Activated T-helper 1 cell treated with anti-CD3 and anti-CD28 coated beads, Interleukin-12 subunit alpha, Interleukin-12 subunit beta, Interleukin-2, Interleukin-4 antibody, amounts not matched to agents 30 ng/mL and 10 ng/mL and 1 ng/mL, durations not matched to agents 14 hours and 24 hours and 36 hours (primary cell): ENCODE measurements at regions of chr20 and their contacts with region 1.

Region 1: DNA sequence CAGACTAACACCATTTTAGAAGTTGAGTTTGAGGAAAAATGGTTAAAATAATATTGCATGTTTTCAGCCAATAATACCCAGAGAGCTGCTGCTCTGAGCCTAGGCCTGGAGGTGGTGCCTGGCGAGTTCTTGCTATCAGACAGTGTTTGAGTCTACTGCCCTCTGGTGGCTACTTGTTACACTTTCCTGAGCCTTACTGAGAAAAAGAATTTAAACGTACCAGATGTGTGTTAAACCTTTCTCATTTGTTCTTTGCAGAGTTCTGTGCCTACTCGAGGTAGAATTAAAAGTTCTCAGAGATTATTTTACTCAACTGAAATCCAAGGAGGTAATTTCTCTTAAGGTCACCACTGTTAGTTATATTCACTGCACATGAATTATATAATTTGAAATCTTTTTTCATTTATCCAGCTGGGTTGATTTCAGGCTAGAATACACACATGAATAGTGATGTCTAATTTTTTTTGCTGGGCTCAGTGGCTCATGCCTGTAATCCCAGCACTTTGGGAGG is 38.2 kb downstream of the SHLD1 start:
- DNase-seq: peak; percentile 66
- H3K4me3 Mint-ChIP-seq: no peak overlapping the region
- H3K27ac Mint-ChIP-seq: no peak overlapping the region
- H3K4me1 Mint-ChIP-seq: peaks cover 5% of the 10 kb centered on the region
- H3K27me3 Mint-ChIP-seq: no peaks in the 10 kb centered on the region

Region 2: DNA sequence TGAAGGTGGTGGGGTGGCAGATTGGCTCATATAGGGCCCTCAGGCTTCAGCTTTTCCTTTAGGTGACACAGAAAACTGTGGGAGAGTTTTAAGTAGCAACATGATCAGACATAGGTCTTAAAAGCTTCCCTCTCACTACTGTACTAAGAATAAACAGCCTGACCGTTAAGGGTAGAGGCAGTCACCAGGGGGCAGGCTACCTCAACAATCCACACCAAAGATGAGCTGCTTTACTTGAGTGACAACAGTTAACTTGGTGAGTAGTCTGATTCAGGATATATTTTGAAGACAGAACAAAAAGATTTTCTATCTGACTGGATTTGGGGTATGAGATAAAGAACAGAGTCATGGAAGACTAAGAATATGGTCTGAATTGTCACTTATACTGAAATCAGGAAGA is 231.3 kb before region 1 on chr20:
- intact Hi-C with region 1: loop called (anchors 1 kb)
- DNase-seq: peak; percentile 36
- H3K4me3 Mint-ChIP-seq: no peak overlapping the region
- H3K27ac Mint-ChIP-seq: peak overlapping the region; percentile 7
- H3K4me1 Mint-ChIP-seq: peaks cover 15% of the 10 kb centered on the region
- H3K27me3 Mint-ChIP-seq: no peaks in the 10 kb centered on the region

Region 3: DNA sequence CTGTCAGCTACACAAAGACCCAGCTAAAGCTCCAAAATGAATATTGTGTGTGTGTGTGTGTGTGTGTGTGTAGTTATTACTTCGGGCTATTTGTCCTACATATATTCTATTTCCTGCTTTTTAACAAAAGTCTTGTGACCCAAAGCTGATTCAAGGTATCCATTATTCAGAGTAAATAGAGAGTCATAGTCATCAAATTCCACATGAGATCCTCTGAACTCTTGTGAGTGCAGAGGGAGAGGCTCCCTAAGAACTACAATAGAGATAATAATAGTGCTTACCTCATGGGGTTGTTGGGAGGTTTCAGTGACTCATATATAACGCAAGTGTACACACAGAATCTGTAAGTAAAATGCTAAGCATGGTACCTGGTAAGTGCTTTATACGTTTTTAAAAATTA is 133.9 kb before region 1 on chr20:
- intact Hi-C with region 1: no loop called
- DNase-seq: no peak
- H3K4me3 Mint-ChIP-seq: no peak overlapping the region
- H3K27ac Mint-ChIP-seq: no peak overlapping the region
- H3K4me1 Mint-ChIP-seq: peaks cover 14% of the 10 kb centered on the region
- H3K27me3 Mint-ChIP-seq: no peaks in the 10 kb centered on the region

Region 4: DNA sequence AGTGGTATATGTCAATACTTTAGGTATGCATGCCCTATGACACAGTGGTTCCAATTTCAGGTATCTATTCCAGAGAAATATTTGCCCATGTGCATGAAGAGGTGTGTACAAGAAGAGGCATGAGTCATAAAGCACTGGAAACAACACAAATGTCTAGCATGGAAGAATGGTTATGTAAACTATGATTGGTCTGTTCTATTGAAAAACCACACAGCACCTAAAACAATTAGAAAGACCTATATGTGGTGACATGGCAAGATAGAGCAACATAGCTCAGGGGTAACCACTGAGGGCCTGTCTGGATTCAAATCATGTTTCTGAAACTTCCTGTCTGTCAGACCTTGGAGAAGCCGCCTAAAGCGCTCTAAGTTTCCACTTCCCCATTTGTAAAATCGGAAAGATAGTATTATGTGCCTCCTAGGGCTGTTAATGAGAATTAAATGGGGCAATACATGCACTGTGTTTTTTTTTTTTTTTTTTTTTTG is 114.2 kb before region 1 on chr20:
- intact Hi-C with region 1: loop called (anchors 1 kb)
- DNase-seq: no peak
- H3K4me3 Mint-ChIP-seq: no peak overlapping the region
- H3K27ac Mint-ChIP-seq: peak overlapping the region; percentile 5
- H3K4me1 Mint-ChIP-seq: peaks cover 7% of the 10 kb centered on the region
- H3K27me3 Mint-ChIP-seq: peaks cover under 1% of the 10 kb centered on the region

Region 5: GRCh38 chr20:5809495-5809894 is 21.1 kb after region 1 on chr20:
- intact Hi-C with region 1: no loop called
- DNase-seq: no peak
- H3K4me3 Mint-ChIP-seq: no peak overlapping the region
- H3K27ac Mint-ChIP-seq: no peak overlapping the region
- H3K4me1 Mint-ChIP-seq: peaks cover 6% of the 10 kb centered on the region
- H3K27me3 Mint-ChIP-seq: no peaks in the 10 kb centered on the region

Region 6: GRCh38 chr20:5844063-5844681 is 55.7 kb after region 1 on chr20:
- intact Hi-C with region 1: loop called (anchors 2 kb)
- DNase-seq: peak; percentile 41
- H3K4me3 Mint-ChIP-seq: peak overlapping the region; percentile 70
- H3K27ac Mint-ChIP-seq: peak overlapping the region; percentile 84
- H3K4me1 Mint-ChIP-seq: peaks cover 35% of the 10 kb centered on the region
- H3K27me3 Mint-ChIP-seq: peaks cover 3% of the 10 kb centered on the region

Region 7: GRCh38 chr20:6008254-6008653 is 219.8 kb after region 1 on chr20:
- intact Hi-C with region 1: loop called (anchors 1 kb)
- DNase-seq: no peak
- H3K4me3 Mint-ChIP-seq: peak overlapping the region; percentile 16
- H3K27ac Mint-ChIP-seq: no peak overlapping the region
- H3K4me1 Mint-ChIP-seq: peaks cover 37% of the 10 kb centered on the region
- H3K27me3 Mint-ChIP-seq: no peaks in the 10 kb centered on the region